ENCODE measurements at regions of chr19 and their contacts with region 1.

Region 1: GRCh38 chr19:19033426-19034203 is at the starts of genes ARMC6 and SUGP2:
- DNase-seq: peak; percentile 85 to 88
- H3K4me3 ChIP-seq: peak within 1 kb of the TSS; percentile 77
- H3K4me3 Mint-ChIP-seq: peak within 1 kb of the TSS; percentile 96
- H3K27ac Mint-ChIP-seq: peak within 1 kb of the TSS; percentile 85
- H3K4me1 ChIP-seq: no peaks in the 10 kb centered on the region; the same call in 1 of the 2 replicates
- H3K4me1 Mint-ChIP-seq: no peaks in the 10 kb centered on the region
- H3K27me3 ChIP-seq: no peaks in the 10 kb centered on the region
- H3K27me3 Mint-ChIP-seq: no peaks in the 10 kb centered on the region
- CTCF ChIP-seq: peak in 1 of 2 experiments; percentile 13
- total RNA-seq, gene ARMC6: 40.1 and 44.6 TPM in 2 replicates
- total RNA-seq, gene SUGP2: 74.1 and 75.6 TPM in 2 replicates

Region 2: DNA sequence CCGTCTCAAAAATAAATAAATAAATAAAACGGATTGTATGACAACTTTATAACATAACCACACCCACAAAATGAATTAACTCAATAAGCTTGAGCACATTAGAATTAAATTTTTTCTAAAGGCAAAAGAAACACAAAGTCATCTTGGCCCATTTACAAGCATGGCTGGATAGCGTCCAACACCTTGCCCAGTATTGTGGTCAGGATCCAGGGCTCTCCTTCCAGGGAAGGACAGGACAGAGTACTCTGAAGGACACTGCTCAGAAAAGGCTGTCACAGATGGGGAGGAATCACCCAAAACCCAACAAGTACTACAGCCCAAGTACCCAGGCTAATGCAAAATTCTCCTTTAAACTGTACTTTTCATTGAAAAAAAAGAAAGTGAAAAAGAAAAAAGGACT is 27.4 kb before region 1 on chr19:
- CTCF ChIA-PET with region 1: no interaction called
- POLR2A ChIA-PET with region 1: interaction called, 10 read pairs
- intact Hi-C with region 1: no loop called
- DNase-seq: no peak
- H3K4me3 ChIP-seq: no peak overlapping the region
- H3K4me3 Mint-ChIP-seq: no peak overlapping the region
- H3K27ac Mint-ChIP-seq: no peak overlapping the region
- H3K4me1 ChIP-seq: no peaks in the 10 kb centered on the region
- H3K4me1 Mint-ChIP-seq: no peaks in the 10 kb centered on the region
- H3K27me3 ChIP-seq: no peaks in the 10 kb centered on the region
- H3K27me3 Mint-ChIP-seq: no peaks in the 10 kb centered on the region
- CTCF ChIP-seq: no peak

Region 3: GRCh38 chr19:19943848-19944582 is 910.4 kb after region 1 on chr19:
- CTCF ChIA-PET with region 1: no interaction called
- POLR2A ChIA-PET with region 1: no interaction called
- intact Hi-C with region 1: no loop called
- DNase-seq: no peak
- H3K4me3 ChIP-seq: no peak overlapping the region
- H3K4me3 Mint-ChIP-seq: no peak overlapping the region
- H3K27ac Mint-ChIP-seq: no peak overlapping the region
- H3K4me1 ChIP-seq: no peaks in the 10 kb centered on the region
- H3K4me1 Mint-ChIP-seq: no peaks in the 10 kb centered on the region
- H3K27me3 ChIP-seq: no peaks in the 10 kb centered on the region
- H3K27me3 Mint-ChIP-seq: no peaks in the 10 kb centered on the region
- CTCF ChIP-seq: no peak

Measured in Caco-2 (cell line).